HEK293 (cell line): ENCODE measurements at regions of chr10 and their contacts with region 1.

Region 1: DNA sequence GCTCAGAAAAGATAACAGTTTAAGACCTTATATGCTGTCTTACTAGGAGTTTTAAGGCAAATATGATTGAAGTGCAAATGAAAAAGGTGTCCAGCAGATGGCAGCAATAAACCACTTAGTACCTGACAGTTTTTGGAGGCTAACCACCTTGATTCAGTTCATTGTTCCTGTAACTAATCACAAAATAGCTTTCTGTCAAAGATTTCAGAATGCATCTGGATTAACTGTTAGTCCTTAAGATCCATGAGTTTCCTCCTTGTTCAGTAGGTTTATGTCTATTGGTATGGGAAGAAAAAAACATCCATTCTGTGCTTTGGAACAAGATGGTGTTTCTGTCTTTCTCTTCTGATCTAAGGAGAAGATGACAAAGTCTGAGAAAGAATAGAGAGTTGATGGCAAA is 46.6 kb downstream of the CCSER2 start:
- H3K4me3 ChIP-seq: no peak overlapping the region
- H3K27ac ChIP-seq: no peak overlapping the region
- H3K4me1 ChIP-seq: no peaks in the 10 kb centered on the region
- CTCF ChIP-seq: peak; percentile 39; the same call in 1 of the 2 replicates

Region 2: GRCh38 chr10:84139126-84140035 is 235.6 kb before region 1 on chr10 and contains the start of gene GHITM:
- CTCF ChIA-PET with region 1: no interaction called
- POLR2A ChIA-PET with region 1: no interaction called
- H3K4me3 ChIP-seq: peak within 1 kb of the TSS; percentile 87
- H3K27ac ChIP-seq: peak within 1 kb of the TSS; percentile 58
- H3K4me1 ChIP-seq: no peaks in the 10 kb centered on the region
- CTCF ChIP-seq: peak; percentile 77

Region 3: GRCh38 chr10:84328418-84329195 is 46.4 kb before region 1 on chr10 and contains the start of gene CCSER2:
- CTCF ChIA-PET with region 1: no interaction called
- POLR2A ChIA-PET with region 1: no interaction called
- H3K4me3 ChIP-seq: peak within 1 kb of the TSS; percentile 67
- H3K27ac ChIP-seq: peak within 1 kb of the TSS; percentile 85
- H3K4me1 ChIP-seq: peaks cover 7% of the 10 kb centered on the region
- CTCF ChIP-seq: no peak

Region 4: GRCh38 chr10:84360637-84361365 is 14.2 kb before region 1 on chr10:
- CTCF ChIA-PET with region 1: interaction called, 10 read pairs
- POLR2A ChIA-PET with region 1: no interaction called
- H3K4me3 ChIP-seq: peak overlapping the region; percentile 23
- H3K27ac ChIP-seq: no peak overlapping the region
- H3K4me1 ChIP-seq: peaks cover 10% of the 10 kb centered on the region
- CTCF ChIP-seq: no peak

Region 5: GRCh38 chr10:84531396-84531795 is 156.4 kb after region 1 on chr10:
- CTCF ChIA-PET with region 1: interaction called, 88 read pairs
- POLR2A ChIA-PET with region 1: no interaction called
- H3K4me3 ChIP-seq: no peak overlapping the region
- H3K27ac ChIP-seq: no peak overlapping the region
- H3K4me1 ChIP-seq: no peaks in the 10 kb centered on the region
- CTCF ChIP-seq: no peak